HCT116 (cell line): ENCODE measurements at regions of chr2 and their contacts with region 1.

Region 1: DNA sequence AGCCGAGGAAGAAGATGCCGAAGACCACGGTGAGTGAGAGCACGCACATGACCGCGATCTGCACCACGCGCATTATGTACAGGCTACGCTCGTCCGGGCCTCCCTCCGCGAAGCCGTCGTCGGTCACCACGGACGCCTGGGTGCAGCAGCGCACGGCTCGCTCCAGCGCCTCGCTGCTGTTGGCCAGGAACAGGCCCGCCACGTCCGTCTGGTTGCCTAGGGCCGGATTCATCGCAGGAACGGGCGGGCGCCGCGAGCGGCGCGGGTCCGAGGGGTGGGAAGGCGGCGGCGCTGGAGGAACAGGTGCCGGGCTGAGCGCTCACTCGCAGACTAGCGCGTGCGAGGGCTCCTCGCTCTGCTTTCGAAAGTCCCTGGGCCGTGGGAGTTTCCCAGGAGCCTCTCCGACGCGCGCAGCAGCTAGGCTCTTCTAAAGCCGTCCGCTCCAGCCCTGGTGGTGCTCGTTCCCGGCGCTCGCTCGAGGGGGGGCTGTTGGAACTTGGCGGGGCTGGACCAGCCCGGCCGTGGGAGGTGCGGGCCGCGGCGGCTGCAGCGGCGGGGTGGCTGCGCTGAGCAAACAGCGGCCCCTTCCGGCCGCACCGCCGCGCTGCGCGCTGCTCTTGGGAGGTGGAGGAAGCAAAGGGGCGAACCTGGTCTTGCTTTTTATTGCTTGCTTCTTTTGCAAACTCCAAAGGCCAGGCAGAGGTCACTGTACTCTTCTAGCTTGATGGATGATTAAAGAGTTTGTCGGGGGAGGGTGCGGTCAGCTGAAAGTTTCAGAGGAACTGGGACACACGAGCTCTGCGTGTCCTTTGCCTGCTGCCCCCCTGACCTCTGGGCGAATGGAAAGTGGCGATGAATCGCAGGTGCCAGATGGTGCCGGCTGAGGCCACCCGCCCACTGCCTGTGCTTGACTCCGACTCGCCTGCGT is at the start of gene RPRM:
- DNase-seq: peak; percentile 29
- ATAC-seq: peak; percentile 98
- H3K4me3 ChIP-seq: peak within 1 kb of the TSS; percentile 38 to 54
- H3K27ac ChIP-seq: no peak within 1 kb of the TSS
- H3K4me1 ChIP-seq: peaks cover 0 to 10% of the 10 kb centered on the region in 2 experiments; a peak in 3 of 4 replicates
- H3K27me3 ChIP-seq: no peaks in the 10 kb centered on the region
- CTCF ChIP-seq: peak; percentile 48 to 94 (median 88); a peak in 5 of 6 replicates
- POLR2A ChIP-seq: no peak
- RAD21 ChIP-seq: peak; percentile 87
- total RNA-seq, gene RPRM: not detected

Region 2: DNA sequence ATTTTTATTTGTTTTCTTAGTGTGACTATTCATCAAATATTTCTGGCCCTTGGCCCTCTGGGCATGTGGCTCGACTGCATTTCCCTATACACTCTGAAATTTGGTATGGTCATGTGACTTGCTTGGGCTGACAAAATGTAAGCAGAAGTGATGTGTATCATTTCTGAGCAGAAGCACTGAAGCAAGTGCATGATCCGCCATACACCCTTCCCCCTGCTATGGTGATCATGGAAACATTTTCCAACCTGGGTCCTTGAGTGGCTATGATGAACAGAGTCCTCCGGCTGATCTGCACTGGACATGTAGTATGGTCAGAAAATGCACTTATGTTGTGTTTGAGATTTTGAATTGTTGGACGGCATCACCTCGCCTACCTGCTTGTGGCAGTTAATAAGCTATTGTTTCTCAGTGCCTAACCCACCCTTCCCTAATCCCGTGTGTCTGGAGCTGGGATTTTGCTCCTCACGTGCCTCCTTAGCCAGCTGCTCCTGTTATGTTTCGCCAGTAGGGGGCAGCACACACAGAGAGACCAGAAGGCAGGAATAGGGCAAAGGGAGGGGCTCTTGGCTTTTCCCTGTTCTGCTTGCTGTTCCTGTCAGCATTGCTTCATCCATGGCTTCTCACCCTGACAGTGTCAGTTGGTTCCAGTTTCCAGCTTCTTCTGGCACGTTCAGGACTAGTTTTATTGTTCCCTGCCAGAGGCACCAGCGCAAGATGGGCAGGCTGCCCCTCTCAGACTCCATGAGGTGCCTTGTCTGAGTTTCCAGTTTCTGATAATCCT is 552.9 kb before region 1 on chr2:
- CTCF ChIA-PET with region 1: no interaction called
- POLR2A ChIA-PET with region 1: no interaction called
- RAD21 ChIA-PET with region 1: no interaction called
- intact Hi-C with region 1: loop called (anchors 2 kb)
- DNase-seq: peak; percentile 79
- ATAC-seq: peak; percentile 98
- H3K4me3 ChIP-seq: no peak overlapping the region
- H3K27ac ChIP-seq: no peak overlapping the region
- H3K4me1 ChIP-seq: peaks cover 0 to 12% of the 10 kb centered on the region in 2 experiments; a peak in 1 of 4 replicates
- H3K27me3 ChIP-seq: no peaks in the 10 kb centered on the region; the same call in 1 of the 2 replicates
- CTCF ChIP-seq: peak; percentile 71 to 95 (median 91)
- POLR2A ChIP-seq: no peak
- RAD21 ChIP-seq: peak; percentile 80

Region 3: GRCh38 chr2:153163058-153163457 is 315.5 kb before region 1 on chr2:
- CTCF ChIA-PET with region 1: no interaction called
- POLR2A ChIA-PET with region 1: no interaction called
- RAD21 ChIA-PET with region 1: interaction called in 1 of 2 experiments, 5 read pairs
- intact Hi-C with region 1: loop called (anchors 1 kb)
- DNase-seq: peak; percentile 53
- ATAC-seq: peak; percentile 64
- H3K4me3 ChIP-seq: no peak overlapping the region
- H3K27ac ChIP-seq: no peak overlapping the region
- H3K4me1 ChIP-seq: peaks cover 3 to 7% of the 10 kb centered on the region in 2 experiments; a peak in 1 of 4 replicates
- H3K27me3 ChIP-seq: peaks cover 5% of the 10 kb centered on the region; the same call in 1 of the 2 replicates
- CTCF ChIP-seq: peak; percentile 62 to 74 (median 70); a peak in 5 of 6 replicates
- POLR2A ChIP-seq: no peak
- RAD21 ChIP-seq: peak; percentile 81

Region 4: GRCh38 chr2:153213086-153213485 is 265.5 kb before region 1 on chr2:
- CTCF ChIA-PET with region 1: no interaction called
- POLR2A ChIA-PET with region 1: no interaction called
- RAD21 ChIA-PET with region 1: no interaction called
- intact Hi-C with region 1: no loop called
- DNase-seq: no peak
- ATAC-seq: no peak
- H3K4me3 ChIP-seq: no peak overlapping the region
- H3K27ac ChIP-seq: no peak overlapping the region
- H3K4me1 ChIP-seq: no peaks in the 10 kb centered on the region
- H3K27me3 ChIP-seq: no peaks in the 10 kb centered on the region
- CTCF ChIP-seq: no peak
- POLR2A ChIP-seq: no peak
- RAD21 ChIP-seq: no peak

Region 5: GRCh38 chr2:154484338-154485099 is 1005.9 kb after region 1 on chr2:
- CTCF ChIA-PET with region 1: no interaction called
- POLR2A ChIA-PET with region 1: no interaction called
- RAD21 ChIA-PET with region 1: no interaction called
- intact Hi-C with region 1: no loop called
- DNase-seq: no peak
- ATAC-seq: no peak
- H3K4me3 ChIP-seq: no peak overlapping the region
- H3K27ac ChIP-seq: no peak overlapping the region
- H3K4me1 ChIP-seq: no peaks in the 10 kb centered on the region
- H3K27me3 ChIP-seq: no peaks in the 10 kb centered on the region
- CTCF ChIP-seq: no peak
- POLR2A ChIP-seq: no peak
- RAD21 ChIP-seq: no peak